A673 (cell line): ENCODE measurements at regions of chr4 and their contacts with region 1.

Region 1: DNA sequence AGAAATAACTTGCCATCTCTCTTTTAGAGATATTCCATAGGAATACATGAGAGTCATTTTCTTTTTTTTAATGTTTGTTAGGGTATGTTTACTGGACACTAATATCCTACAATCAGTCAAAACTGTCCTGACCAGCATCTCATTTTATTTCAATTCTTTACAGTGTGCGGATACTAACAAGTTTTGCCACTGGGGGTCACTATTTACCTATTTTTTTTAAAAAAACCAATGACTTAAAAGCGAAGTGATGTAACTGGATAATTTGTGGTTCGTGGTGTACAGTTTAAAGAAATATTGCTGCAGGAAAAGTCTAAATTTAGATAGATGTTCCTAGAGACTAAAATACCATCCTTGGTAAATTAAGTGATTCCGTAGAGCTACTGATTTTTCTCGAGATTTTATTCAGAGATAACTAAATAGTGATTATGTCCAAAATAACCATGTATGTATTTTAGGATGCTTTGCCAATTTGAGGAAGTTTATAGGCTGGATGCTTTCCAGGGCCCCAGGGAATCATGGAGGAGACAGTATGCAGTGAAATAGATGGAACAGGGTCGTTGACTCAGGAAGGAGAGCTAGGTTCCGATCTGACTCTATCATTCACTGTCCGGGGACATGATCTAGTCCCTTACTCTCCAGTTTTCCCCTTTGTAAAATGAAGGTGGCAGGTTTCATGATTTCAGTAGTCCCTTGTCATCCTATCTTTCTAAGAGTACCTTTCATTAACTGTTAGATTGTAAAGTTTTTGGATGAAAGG is 34.0 kb upstream of the GNPDA2 start:
- DNase-seq: peak; percentile 70
- H3K4me3 ChIP-seq: no peak overlapping the region
- H3K27ac ChIP-seq: no peak overlapping the region
- H3K4me1 ChIP-seq: no peaks in the 10 kb centered on the region
- H3K27me3 ChIP-seq: no peaks in the 10 kb centered on the region
- CTCF ChIP-seq: peak; percentile 65

Region 2: DNA sequence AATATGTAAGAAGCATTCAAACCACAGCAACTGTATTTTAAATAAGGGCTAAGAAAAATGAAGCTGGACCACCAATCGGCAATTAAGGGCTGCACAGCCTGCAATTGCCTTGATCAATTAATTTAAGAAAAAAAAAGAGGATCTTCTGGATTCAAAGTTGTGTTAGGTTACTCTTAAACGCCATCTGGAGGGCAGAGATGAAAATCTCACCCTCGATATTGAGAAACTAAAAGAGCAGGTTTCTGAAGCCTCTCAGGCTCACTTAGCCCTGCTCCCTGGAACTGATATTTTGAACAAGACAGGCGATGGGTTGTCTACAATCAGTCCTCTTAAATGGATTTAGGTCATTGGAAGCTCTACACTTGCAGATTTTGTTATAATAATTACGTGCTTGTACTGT is 1288.4 kb before region 1 on chr4:
- CTCF ChIA-PET with region 1: no interaction called
- POLR2A ChIA-PET with region 1: no interaction called
- intact Hi-C with region 1: no loop called
- DNase-seq: no peak
- H3K4me3 ChIP-seq: no peak overlapping the region
- H3K27ac ChIP-seq: no peak overlapping the region
- H3K4me1 ChIP-seq: no peaks in the 10 kb centered on the region
- H3K27me3 ChIP-seq: no peaks in the 10 kb centered on the region
- CTCF ChIP-seq: no peak

Region 3: GRCh38 chr4:44678094-44679041 is 82.0 kb before region 1 on chr4 and contains the start of gene GUF1:
- CTCF ChIA-PET with region 1: no interaction called
- POLR2A ChIA-PET with region 1: no interaction called
- intact Hi-C with region 1: no loop called
- DNase-seq: peak; percentile 95
- H3K4me3 ChIP-seq: peak within 1 kb of the TSS; percentile 70
- H3K27ac ChIP-seq: peak within 1 kb of the TSS; percentile 88
- H3K4me1 ChIP-seq: peaks cover 15% of the 10 kb centered on the region
- H3K27me3 ChIP-seq: no peaks in the 10 kb centered on the region
- CTCF ChIP-seq: no peak
- total RNA-seq, gene GUF1: 26.1 and 27.2 TPM in 2 replicates

Region 4: GRCh38 chr4:44927399-44928380 is 167.4 kb after region 1 on chr4:
- CTCF ChIA-PET with region 1: no interaction called
- POLR2A ChIA-PET with region 1: no interaction called
- intact Hi-C with region 1: loop called (anchors 2 kb)
- DNase-seq: peak; percentile 53
- H3K4me3 ChIP-seq: no peak overlapping the region
- H3K27ac ChIP-seq: no peak overlapping the region
- H3K4me1 ChIP-seq: no peaks in the 10 kb centered on the region
- H3K27me3 ChIP-seq: no peaks in the 10 kb centered on the region
- CTCF ChIP-seq: peak; percentile 63

Region 5: GRCh38 chr4:46648088-46648744 is 1887.9 kb after region 1 on chr4:
- CTCF ChIA-PET with region 1: no interaction called
- POLR2A ChIA-PET with region 1: no interaction called
- intact Hi-C with region 1: loop called (anchors 10 kb)
- DNase-seq: peak; percentile 64
- H3K4me3 ChIP-seq: no peak overlapping the region
- H3K27ac ChIP-seq: no peak overlapping the region
- H3K4me1 ChIP-seq: no peaks in the 10 kb centered on the region
- H3K27me3 ChIP-seq: peaks cover 12% of the 10 kb centered on the region
- CTCF ChIP-seq: peak; percentile 78